Posterior vena cava (tissue), 2 donors: ENCODE measurements at regions of chr1 and their contacts with region 1.

Region 1: GRCh38 chr1:115595279-115596079 is 46.3 kb upstream of the VANGL1 start:
- DNase-seq: peak; percentile 95

Region 2: DNA sequence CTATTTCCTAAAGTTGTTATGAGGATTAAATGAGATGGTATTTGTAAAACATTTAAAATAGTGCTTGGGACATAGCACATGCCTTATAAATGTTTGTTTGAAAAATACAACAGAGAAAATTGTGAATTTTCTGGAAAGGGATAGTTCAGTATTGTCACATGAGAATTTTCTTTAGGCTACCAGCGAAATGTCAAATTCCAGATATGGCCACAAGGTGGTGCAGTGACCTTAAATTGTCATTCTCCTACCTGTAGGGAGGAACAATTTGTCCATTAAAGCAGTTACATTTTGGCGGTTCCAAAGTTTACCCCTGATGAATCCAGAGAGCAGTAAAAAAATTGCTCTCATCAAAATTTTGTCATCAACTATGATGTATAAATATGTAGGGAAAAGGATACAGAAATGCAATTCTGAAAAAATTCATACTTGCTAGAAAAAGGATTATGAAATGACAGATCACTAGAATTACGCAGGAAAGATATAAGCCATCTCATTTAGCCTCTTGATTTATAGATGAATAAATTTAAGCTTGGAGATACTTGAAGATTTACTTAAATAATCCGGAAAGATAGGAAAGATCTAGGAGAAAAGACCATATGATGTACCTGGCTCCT is 616.1 kb before region 1 on chr1:
- intact Hi-C with region 1: loop called in 1 of 2 experiments (anchors 10 kb)
- DNase-seq: no peak

Region 3: DNA sequence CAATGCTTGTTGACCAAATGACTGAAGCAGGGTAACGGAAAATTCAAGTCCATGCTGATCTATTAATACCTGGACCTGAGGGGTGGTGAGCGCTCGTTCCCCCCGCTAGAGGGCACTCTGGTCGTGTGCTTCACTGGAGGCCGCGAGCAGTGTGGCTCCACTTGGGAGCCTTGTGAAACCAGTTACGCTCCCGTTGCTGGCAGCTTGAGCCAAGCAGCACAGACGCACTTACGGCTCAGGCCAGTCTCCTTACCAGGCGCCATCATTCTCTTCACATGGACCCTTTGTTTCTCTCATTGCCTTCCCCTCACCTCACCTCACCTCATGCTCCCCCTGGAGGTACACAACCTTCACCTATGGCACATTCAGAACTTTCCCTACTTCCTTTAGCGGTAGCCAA is 456.5 kb before region 1 on chr1:
- intact Hi-C with region 1: loop called (anchors 2 to 5 kb)
- DNase-seq: peak; percentile 96

Region 4: DNA sequence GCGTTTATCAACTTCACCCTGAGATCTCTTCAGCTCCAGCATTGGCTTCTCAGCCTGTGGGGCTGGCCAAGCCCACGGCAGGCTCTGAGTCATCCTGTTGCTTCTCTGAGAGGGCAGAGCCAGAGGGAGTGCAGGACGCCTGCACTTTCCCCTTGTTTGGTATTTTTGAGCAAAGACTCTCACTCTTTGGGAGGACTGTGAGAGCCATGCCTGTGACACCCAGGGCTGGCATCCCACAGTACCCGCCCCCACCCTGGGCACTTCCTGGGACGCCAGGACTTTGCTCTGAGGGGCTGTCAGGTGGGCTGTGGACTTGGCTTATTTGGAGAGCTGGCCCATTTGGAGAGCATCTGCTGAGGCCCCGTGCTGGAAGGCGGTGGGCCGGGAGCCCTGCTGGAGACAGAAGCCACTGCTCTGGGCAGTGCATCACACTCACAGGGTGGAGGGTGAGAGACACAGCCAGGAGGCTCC is 83.7 kb after region 1 on chr1:
- intact Hi-C with region 1: no loop called
- DNase-seq: peak; percentile 84